ENCODE measurements at regions of chr1 and their contacts with region 1.

Region 1: DNA sequence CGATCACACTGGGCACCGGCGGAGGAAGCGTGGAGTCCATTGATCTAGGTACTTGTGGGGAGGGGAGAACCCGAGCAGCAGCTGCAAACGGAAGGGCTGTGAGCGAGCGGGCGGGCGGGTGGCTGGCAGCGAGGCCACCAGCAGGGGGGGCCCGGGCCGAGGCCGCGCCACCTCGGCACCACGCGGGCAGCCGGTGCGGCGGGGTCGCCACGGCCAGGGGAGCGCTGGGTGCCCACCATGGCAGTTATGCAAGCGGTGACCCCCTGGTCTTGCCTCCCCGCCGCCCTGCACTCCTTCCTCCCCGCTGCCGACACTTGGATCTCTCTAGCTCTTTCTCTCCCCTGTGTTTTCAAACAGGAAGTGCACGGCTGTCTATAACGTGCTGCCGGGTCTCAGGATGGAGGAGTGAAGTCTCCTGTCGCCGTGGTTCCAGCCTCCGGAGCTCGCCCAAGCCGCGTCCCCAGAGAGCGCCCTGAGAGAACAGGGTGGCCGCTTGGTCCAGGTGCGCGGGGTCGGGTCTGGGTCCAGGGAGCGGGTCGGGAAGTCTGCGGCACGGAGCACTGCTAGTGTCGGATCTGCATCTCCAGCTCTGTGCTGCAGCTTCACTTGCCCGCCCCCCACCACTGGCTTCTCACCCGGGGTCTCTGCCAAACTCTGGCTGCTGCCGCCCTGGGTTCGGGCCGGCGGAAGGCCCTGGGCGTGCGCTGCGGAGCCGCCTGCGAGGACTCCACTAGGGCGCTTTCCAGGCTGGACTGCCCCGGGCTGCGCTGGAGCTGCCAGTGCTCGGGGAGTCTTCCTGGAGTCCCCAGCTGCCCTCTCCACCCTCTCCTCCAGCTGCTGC is 22.7 kb downstream of the LRRC8D start:
- DNase-seq: peak; percentile 64
- H3K4me3 Mint-ChIP-seq: peak overlapping the region; percentile 95
- H3K27ac Mint-ChIP-seq: peak overlapping the region; percentile 85
- H3K4me1 Mint-ChIP-seq: peaks cover 19% of the 10 kb centered on the region
- H3K27me3 Mint-ChIP-seq: no peaks in the 10 kb centered on the region
- CTCF ChIP-seq: peak; percentile 77

Region 2: DNA sequence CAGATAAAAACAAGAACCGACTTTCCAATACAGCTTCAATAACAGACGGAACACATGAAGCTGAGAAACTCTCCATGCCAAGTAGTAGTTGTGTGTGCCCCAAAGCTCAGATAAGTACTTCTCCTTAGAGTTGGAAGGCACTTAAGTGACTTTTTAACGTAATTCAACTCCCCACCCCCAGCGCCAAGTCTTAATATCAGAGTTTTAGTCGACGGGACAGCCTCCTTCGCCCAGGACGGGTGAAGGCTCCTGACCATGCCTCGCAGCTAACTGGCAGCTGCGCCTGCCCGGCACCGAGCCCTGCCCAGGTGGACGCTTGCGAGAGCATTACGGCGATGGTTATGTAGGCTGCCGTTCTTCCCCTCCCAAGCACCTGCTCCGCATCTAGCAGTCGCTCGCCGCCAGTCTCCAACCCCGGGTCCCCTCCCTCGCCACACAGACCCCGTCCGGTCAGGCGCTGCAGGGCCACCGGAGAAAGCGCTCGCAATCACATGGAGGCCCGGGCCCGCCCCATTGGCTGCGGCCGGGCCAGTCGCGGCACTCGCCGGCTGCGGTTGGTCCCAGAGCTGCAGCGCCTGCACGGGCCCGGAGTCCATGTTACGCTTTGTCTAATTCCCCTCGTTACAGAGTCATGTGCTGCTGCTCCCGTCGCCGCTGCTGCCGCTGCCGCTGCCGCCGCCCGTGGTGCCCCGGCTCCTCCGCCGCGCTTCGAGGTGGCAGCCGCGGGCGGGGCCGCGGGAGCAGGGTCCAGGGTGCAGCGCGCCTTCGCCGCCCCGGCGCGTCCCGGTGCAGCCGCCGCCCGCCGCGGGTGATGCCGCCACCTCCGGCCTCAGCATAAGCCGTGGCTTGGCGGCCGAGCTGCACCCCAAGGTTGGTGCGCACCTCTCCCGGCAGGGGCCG is 22.8 kb before region 1 on chr1 and contains the start of gene LRRC8D:
- CTCF ChIA-PET with region 1: interaction called, 48 read pairs
- POLR2A ChIA-PET with region 1: interaction called, 61 read pairs
- intact Hi-C with region 1: no loop called
- DNase-seq: peak; percentile 76
- H3K4me3 Mint-ChIP-seq: peak within 1 kb of the TSS; percentile 89
- H3K27ac Mint-ChIP-seq: no peak within 1 kb of the TSS
- H3K4me1 Mint-ChIP-seq: peaks cover 38% of the 10 kb centered on the region
- H3K27me3 Mint-ChIP-seq: peaks cover 6% of the 10 kb centered on the region
- CTCF ChIP-seq: no peak
- total RNA-seq, gene LRRC8D: 42.0 and 43.7 TPM in 2 replicates

Region 3: GRCh38 chr1:89833183-89834082 is 10.1 kb before region 1 on chr1:
- CTCF ChIA-PET with region 1: interaction called, 48 read pairs
- POLR2A ChIA-PET with region 1: interaction called, 24 read pairs
- intact Hi-C with region 1: no loop called
- DNase-seq: no peak
- H3K4me3 Mint-ChIP-seq: no peak overlapping the region
- H3K27ac Mint-ChIP-seq: no peak overlapping the region
- H3K4me1 Mint-ChIP-seq: peaks cover 6% of the 10 kb centered on the region
- H3K27me3 Mint-ChIP-seq: no peaks in the 10 kb centered on the region
- CTCF ChIP-seq: no peak

Region 4: DNA sequence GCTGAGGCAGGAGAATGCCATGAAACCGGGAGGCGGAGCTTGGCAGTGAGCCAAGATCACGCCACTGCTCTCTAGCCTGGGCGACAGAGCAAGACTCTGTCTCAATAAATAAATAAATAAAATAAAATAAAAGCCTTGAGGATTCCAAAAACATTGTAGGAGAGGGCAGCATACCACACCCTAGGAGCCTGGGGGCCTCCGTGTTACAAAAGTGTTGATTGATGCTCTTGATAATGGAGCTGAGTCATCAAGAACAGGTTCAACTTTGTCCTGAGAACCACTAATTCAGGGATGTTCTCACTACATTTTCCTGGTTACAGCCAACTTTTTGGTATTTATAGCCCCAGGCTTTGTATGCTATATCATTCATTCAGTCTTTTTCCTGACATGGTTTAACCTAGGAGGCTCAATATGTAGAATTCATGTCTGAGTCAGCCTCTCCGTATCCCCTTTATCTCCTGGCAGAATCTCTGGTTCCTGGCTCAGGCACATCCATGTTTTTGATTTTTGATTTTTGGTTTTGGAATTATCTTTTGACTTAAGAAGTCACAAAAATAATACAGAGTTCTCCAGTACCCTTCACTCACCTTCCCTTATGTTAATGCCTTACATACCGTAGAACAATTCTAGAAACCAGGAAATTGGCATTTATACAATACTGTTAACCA is 46.7 kb after region 1 on chr1:
- CTCF ChIA-PET with region 1: interaction called, 4 read pairs
- POLR2A ChIA-PET with region 1: interaction called, 24 read pairs
- intact Hi-C with region 1: loop called (anchors 1 kb)
- DNase-seq: peak; percentile 99
- H3K4me3 Mint-ChIP-seq: peak overlapping the region; percentile 70
- H3K27ac Mint-ChIP-seq: peak overlapping the region; percentile 87
- H3K4me1 Mint-ChIP-seq: peaks cover 63% of the 10 kb centered on the region
- H3K27me3 Mint-ChIP-seq: no peaks in the 10 kb centered on the region
- CTCF ChIP-seq: no peak

Region 5: DNA sequence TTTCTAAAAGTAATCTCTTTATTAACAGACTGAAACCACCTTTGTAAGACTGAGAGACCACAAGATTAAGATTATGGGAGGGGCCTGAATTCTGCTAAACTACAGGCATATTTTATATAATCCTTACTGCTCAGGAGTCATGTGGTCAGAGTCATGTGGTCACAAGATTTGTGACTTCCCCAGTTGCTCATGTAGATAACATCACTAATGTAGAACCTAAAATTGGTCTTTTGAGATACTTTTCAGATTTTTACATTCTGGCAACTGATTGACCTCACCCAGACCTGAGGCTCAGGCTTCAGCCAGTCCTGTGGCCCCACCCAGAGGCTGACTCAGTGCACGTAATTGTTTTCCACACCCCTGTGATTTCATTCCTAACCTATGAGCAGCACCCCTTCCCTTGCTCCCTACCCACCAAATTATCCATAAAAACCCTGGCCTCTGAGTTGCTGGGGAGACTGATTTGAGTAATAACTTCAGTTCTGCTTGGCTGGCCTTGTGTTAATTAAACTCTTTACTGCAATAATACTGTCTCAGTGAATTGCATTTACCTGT is 109.6 kb after region 1 on chr1:
- CTCF ChIA-PET with region 1: interaction called, 12 read pairs
- POLR2A ChIA-PET with region 1: interaction called, 3 read pairs
- intact Hi-C with region 1: loop called (anchors 1 kb)
- DNase-seq: peak; percentile 87
- H3K4me3 Mint-ChIP-seq: no peak overlapping the region
- H3K27ac Mint-ChIP-seq: peak overlapping the region; percentile 64
- H3K4me1 Mint-ChIP-seq: peaks cover 17% of the 10 kb centered on the region
- H3K27me3 Mint-ChIP-seq: no peaks in the 10 kb centered on the region
- CTCF ChIP-seq: peak; percentile 24

Region 6: DNA sequence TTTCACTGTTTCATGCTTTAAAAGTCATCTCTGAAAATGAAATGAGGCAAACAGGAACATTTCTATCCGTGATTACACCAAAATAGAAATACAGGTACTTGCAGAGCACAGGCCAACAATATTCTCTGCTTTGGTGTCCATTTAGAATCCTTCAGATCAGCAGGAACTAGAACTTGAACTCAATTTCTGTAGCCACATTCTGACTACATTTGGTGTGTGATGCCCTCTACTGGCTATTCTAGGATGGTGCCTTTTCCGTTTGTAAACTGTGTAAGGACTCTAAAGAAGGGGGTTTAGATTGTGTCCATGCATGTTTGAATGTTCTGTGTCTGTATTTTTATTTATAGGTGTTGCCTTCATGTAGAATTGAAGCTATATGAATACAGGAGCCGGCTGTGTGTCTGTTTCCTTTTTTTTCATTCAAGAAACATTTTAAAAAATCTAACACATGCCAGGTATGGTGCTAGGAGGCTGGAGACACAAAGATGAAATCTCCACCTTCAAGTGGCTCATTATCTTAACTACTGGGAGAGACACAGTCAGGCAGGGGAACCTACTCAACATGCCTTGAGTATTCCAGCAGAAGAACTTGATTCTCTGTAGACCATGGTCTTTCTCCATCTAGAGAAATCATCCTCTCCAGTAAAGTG is 143.8 kb after region 1 on chr1:
- CTCF ChIA-PET with region 1: interaction called, 27 read pairs
- POLR2A ChIA-PET with region 1: interaction called, 11 read pairs
- intact Hi-C with region 1: loop called (anchors 1 kb)
- DNase-seq: peak; percentile 81
- H3K4me3 Mint-ChIP-seq: no peak overlapping the region
- H3K27ac Mint-ChIP-seq: no peak overlapping the region
- H3K4me1 Mint-ChIP-seq: peaks cover 12% of the 10 kb centered on the region
- H3K27me3 Mint-ChIP-seq: no peaks in the 10 kb centered on the region
- CTCF ChIP-seq: peak; percentile 84